ENCODE measurements at regions of chr13 and their contacts with region 1.

Region 1: DNA sequence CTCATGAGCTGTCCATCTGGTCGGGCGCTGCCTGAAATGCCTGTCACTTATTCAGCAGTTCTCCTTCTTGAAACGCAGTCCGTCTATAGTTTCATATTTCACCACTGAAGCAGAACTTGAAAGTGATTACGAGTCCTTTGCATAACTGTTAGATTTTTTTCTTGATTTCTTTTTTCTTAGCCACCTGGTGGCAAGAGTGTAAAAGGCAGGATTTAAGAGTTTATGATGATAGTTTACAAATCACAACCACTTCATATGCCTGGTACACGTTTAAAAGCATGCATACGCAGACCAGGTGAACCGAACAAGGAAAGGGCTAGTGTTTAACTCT is 45.8 kb downstream of the GGACT start:
- DNase-seq: no peak
- H3K4me3 ChIP-seq: no peak overlapping the region
- H3K27ac ChIP-seq: no peak overlapping the region
- H3K4me1 ChIP-seq: peaks cover 0 to 3% (median 0%) of the 10 kb centered on the region in 4 experiments; a peak in 4 of 7 replicates
- H3K27me3 ChIP-seq: no peaks in the 10 kb centered on the region; a peak in 1 of 7 replicates
- CTCF ChIP-seq: peak in 2 of 3 experiments; percentile 10 to 42; a peak in 2 of 4 replicates
- EP300 ChIP-seq: no peak
- POLR2A ChIP-seq: no peak
- RAD21 ChIP-seq: peak; percentile 12 to 25; a peak in 2 of 4 replicates

Region 2: GRCh38 chr13:100491164-100491842 is 51.5 kb before region 1 on chr13:
- CTCF ChIA-PET with region 1: no interaction called
- POLR2A ChIA-PET with region 1: no interaction called
- DNase-seq: no peak
- H3K4me3 ChIP-seq: no peak overlapping the region
- H3K27ac ChIP-seq: no peak overlapping the region
- H3K4me1 ChIP-seq: peaks cover 0 to 15% (median 11%) of the 10 kb centered on the region in 4 experiments; a peak in 4 of 7 replicates
- H3K27me3 ChIP-seq: no peaks in the 10 kb centered on the region
- CTCF ChIP-seq: no peak
- EP300 ChIP-seq: no peak
- POLR2A ChIP-seq: no peak; a peak in 1 of 3 replicates
- RAD21 ChIP-seq: no peak

Region 3: GRCh38 chr13:100530671-100531213 is 12.0 kb before region 1 on chr13:
- CTCF ChIA-PET with region 1: interaction called, 32 read pairs
- POLR2A ChIA-PET with region 1: no interaction called
- DNase-seq: peak in 1 of 2 experiments; percentile 47
- H3K4me3 ChIP-seq: no peak overlapping the region
- H3K27ac ChIP-seq: no peak overlapping the region
- H3K4me1 ChIP-seq: peaks cover 2 to 10% (median 3%) of the 10 kb centered on the region in 4 experiments; a peak in 5 of 7 replicates
- H3K27me3 ChIP-seq: no peaks in the 10 kb centered on the region
- CTCF ChIP-seq: no peak
- EP300 ChIP-seq: no peak
- POLR2A ChIP-seq: no peak
- RAD21 ChIP-seq: no peak

Measured in H1 (cell line).